CD4-positive, alpha-beta T cell (primary cell): ENCODE measurements at regions of chr12 and their contacts with region 1.

Region 1: GRCh38 chr12:122225683-122226407 is at the start of gene DIABLO:
- DNase-seq: peak; percentile 99 to 100 (median 100)
- ATAC-seq: peak; percentile 94
- H3K4me3 ChIP-seq: peak within 1 kb of the TSS; percentile 94
- H3K4me3 Mint-ChIP-seq: peak within 1 kb of the TSS; percentile 95
- H3K27ac ChIP-seq: peak within 1 kb of the TSS; percentile 95 to 97
- H3K27ac Mint-ChIP-seq: peak within 1 kb of the TSS; percentile 95
- H3K4me1 ChIP-seq: peaks cover 37% of the 10 kb centered on the region
- H3K4me1 Mint-ChIP-seq: peaks cover 37% of the 10 kb centered on the region
- H3K27me3 ChIP-seq: no peaks in the 10 kb centered on the region
- H3K27me3 Mint-ChIP-seq: no peaks in the 10 kb centered on the region
- CTCF ChIP-seq: no peak
- total RNA-seq, gene DIABLO: 90.3 to 91.3 TPM

Region 2: DNA sequence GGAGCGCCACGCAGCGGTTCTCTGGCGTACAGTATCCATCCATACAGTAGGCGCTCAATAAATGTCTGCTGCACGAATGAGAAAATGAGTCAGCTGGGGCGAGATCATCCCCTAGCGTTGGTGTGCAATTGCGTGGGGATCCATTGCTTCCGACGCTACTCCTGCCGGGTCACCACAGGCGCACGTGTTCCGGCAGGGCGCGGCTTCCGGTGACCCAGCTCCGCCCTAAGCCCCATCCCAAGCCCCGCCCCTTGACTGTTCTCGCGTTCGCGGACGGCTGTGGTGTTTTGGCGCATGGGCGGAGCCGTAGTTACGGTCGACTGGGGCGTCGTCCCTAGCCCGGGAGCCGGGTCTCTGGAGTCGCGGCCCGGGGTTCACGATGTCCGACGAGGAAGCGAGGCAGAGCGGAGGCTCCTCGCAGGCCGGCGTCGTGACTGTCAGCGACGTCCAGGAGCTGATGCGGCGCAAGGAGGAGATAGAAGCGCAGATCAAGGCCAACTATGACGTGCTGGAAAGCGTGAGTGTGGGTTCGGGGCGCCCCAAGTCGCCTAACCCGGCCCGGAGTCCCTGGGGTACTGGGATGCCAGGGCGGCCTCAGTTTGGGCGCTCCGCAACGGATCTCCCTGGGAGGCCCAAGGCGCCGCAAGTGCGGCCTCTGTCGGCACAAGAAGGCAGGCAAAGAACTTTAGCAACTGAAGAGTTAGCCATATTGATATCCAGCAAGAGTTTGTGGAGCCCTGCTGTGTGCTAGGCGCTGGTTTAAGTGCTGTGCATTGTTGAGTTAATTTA is 337.2 kb before region 1 on chr12 and contains the start of gene PSMD9:
- CTCF ChIA-PET with region 1: no interaction called
- POLR2A ChIA-PET with region 1: interaction called, 10 read pairs
- intact Hi-C with region 1: no loop called
- DNase-seq: peak; percentile 96 to 99 (median 98)
- ATAC-seq: peak; percentile 90
- H3K4me3 ChIP-seq: peak within 1 kb of the TSS; percentile 96
- H3K4me3 Mint-ChIP-seq: peak within 1 kb of the TSS; percentile 96
- H3K27ac ChIP-seq: peak within 1 kb of the TSS; percentile 86 to 97
- H3K27ac Mint-ChIP-seq: peak within 1 kb of the TSS; percentile 96
- H3K4me1 ChIP-seq: peaks cover 39% of the 10 kb centered on the region
- H3K4me1 Mint-ChIP-seq: peaks cover 32% of the 10 kb centered on the region
- H3K27me3 ChIP-seq: no peaks in the 10 kb centered on the region
- H3K27me3 Mint-ChIP-seq: no peaks in the 10 kb centered on the region
- CTCF ChIP-seq: peak; percentile 21
- total RNA-seq, gene PSMD9: 29.5 to 31.8 TPM

Region 3: DNA sequence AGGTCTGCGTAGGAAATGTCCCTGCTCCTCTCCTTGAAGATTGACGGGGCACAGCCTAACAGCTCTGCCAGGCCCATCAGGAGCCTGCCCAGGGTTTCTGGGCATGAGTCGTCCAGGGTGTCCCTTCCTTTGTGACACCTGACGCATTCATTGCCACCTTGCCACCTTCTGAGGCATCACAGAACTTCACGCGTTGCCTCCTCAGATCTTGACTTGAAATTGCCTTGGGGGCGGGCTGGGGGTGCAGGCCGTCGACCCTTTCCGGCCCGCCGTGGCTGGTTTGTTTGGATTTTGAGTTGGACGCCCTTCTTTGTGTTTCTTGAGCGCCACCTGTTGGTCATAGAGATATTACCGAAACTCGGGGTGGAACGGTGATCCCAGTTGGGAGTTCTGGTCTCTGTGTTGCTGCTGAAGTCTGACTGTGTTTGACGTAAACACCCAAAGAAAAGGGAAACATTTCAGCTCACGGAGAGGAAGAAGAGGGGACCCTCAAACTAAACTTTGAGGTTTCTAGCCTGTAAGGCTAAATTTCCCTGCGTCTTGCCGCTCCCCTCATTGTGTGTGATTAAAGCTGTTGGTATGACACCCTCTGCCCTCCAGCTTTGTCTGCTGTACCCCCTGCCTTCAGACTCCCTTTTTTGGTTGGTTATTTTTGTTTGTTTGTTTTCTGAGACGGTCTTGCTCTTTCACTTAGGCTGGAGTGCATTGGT is 102.6 kb before region 1 on chr12:
- CTCF ChIA-PET with region 1: no interaction called
- POLR2A ChIA-PET with region 1: no interaction called
- intact Hi-C with region 1: no loop called
- DNase-seq: peak; percentile 53 to 84 (median 66)
- ATAC-seq: peak; percentile 79
- H3K4me3 ChIP-seq: no peak overlapping the region
- H3K4me3 Mint-ChIP-seq: peak overlapping the region; percentile 68
- H3K27ac ChIP-seq: no peak overlapping the region
- H3K27ac Mint-ChIP-seq: peak overlapping the region; percentile 69
- H3K4me1 ChIP-seq: peaks cover 19% of the 10 kb centered on the region
- H3K4me1 Mint-ChIP-seq: peaks cover 39% of the 10 kb centered on the region
- H3K27me3 ChIP-seq: no peaks in the 10 kb centered on the region
- H3K27me3 Mint-ChIP-seq: no peaks in the 10 kb centered on the region
- CTCF ChIP-seq: peak; percentile 95

Region 4: GRCh38 chr12:122166422-122167349 is 59.2 kb before region 1 on chr12:
- CTCF ChIA-PET with region 1: no interaction called
- POLR2A ChIA-PET with region 1: no interaction called
- intact Hi-C with region 1: no loop called
- DNase-seq: peak in 1 of 14 experiments; percentile 43
- ATAC-seq: no peak
- H3K4me3 ChIP-seq: no peak overlapping the region
- H3K4me3 Mint-ChIP-seq: no peak overlapping the region
- H3K27ac ChIP-seq: no peak overlapping the region
- H3K27ac Mint-ChIP-seq: no peak overlapping the region
- H3K4me1 ChIP-seq: peaks cover 4% of the 10 kb centered on the region
- H3K4me1 Mint-ChIP-seq: no peaks in the 10 kb centered on the region
- H3K27me3 ChIP-seq: no peaks in the 10 kb centered on the region
- H3K27me3 Mint-ChIP-seq: no peaks in the 10 kb centered on the region
- CTCF ChIP-seq: no peak

Region 5: GRCh38 chr12:122215771-122216170 is 10.1 kb before region 1 on chr12:
- CTCF ChIA-PET with region 1: no interaction called
- POLR2A ChIA-PET with region 1: interaction called, 18 read pairs
- intact Hi-C with region 1: no loop called
- DNase-seq: no peak
- ATAC-seq: no peak
- H3K4me3 ChIP-seq: no peak overlapping the region
- H3K4me3 Mint-ChIP-seq: no peak overlapping the region
- H3K27ac ChIP-seq: no peak overlapping the region
- H3K27ac Mint-ChIP-seq: no peak overlapping the region
- H3K4me1 ChIP-seq: no peaks in the 10 kb centered on the region
- H3K4me1 Mint-ChIP-seq: peaks cover under 1% of the 10 kb centered on the region
- H3K27me3 ChIP-seq: no peaks in the 10 kb centered on the region
- H3K27me3 Mint-ChIP-seq: no peaks in the 10 kb centered on the region
- CTCF ChIP-seq: no peak

Region 6: DNA sequence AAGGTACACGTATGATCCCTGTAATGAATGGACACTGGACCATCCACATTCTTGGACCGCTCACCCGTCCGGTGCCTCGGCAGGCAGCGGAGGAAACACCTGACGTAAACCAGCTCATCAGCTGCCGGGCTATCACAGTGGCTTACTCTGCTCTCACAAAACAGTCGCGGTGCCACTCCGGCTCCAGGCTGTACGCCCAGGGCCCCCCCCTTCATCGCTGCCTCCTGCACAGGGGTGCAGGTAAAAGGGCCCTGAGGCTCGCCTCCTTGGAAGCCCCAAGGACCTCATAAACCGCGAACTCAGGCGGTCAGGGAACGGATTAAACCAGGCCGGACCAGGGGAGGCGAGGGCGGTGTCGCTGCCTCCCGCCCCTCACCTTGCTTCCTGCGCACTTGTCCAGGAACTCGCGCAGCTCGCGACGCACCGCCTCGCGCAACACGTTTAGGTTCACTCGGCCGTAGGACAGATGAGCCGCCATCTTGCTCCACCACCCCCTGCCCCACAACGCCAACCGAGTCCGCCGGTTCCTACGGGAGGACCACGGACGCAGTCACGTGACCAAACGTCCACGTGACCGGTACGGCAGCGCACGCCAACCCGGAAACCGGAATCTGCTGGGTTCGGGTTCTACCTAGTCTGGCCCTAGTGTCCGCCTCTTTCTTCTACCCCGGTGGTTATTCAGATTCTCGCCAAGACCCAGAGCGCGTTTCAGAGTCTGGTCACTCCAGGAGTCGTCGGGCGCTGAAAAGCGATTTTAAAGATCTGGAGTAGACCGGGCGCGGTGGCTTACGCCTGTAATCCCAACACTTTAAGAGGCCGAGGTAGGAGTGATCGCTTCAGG is 40.3 kb after region 1 on chr12 and contains the start of gene VPS33A:
- CTCF ChIA-PET with region 1: interaction called, 24 read pairs
- POLR2A ChIA-PET with region 1: interaction called, 49 read pairs
- intact Hi-C with region 1: loop called (anchors 1 kb)
- DNase-seq: peak; percentile 85 to 97 (median 88)
- ATAC-seq: peak; percentile 68
- H3K4me3 ChIP-seq: peak within 1 kb of the TSS; percentile 85
- H3K4me3 Mint-ChIP-seq: peak within 1 kb of the TSS; percentile 100
- H3K27ac ChIP-seq: peak within 1 kb of the TSS; percentile 94 to 97
- H3K27ac Mint-ChIP-seq: peak within 1 kb of the TSS; percentile 99
- H3K4me1 ChIP-seq: peaks cover 25% of the 10 kb centered on the region
- H3K4me1 Mint-ChIP-seq: peaks cover 33% of the 10 kb centered on the region
- H3K27me3 ChIP-seq: no peaks in the 10 kb centered on the region
- H3K27me3 Mint-ChIP-seq: peaks cover 8% of the 10 kb centered on the region
- CTCF ChIP-seq: no peak
- total RNA-seq, gene VPS33A: 12.0 to 14.2 TPM

Region 7: GRCh38 chr12:122526683-122527477 is 301.0 kb after region 1 on chr12 and contains the starts of genes KNTC1 and RSRC2:
- CTCF ChIA-PET with region 1: no interaction called
- POLR2A ChIA-PET with region 1: interaction called, 19 read pairs
- intact Hi-C with region 1: loop called in 1 of 2 experiments (anchors 5 kb)
- DNase-seq: peak; percentile 93 to 100 (median 96)
- ATAC-seq: peak; percentile 90
- H3K4me3 ChIP-seq: peak within 1 kb of the TSS; percentile 97
- H3K4me3 Mint-ChIP-seq: no peak within 1 kb of the TSS
- H3K27ac ChIP-seq: peak within 1 kb of the TSS; percentile 98 to 99
- H3K27ac Mint-ChIP-seq: no peak within 1 kb of the TSS
- H3K4me1 ChIP-seq: peaks cover 21% of the 10 kb centered on the region
- H3K4me1 Mint-ChIP-seq: peaks cover 36% of the 10 kb centered on the region
- H3K27me3 ChIP-seq: no peaks in the 10 kb centered on the region
- H3K27me3 Mint-ChIP-seq: no peaks in the 10 kb centered on the region
- CTCF ChIP-seq: no peak
- total RNA-seq, gene KNTC1: 23.3 to 23.8 TPM
- total RNA-seq, gene RSRC2: 339 to 341 TPM

Region 8: GRCh38 chr12:122974274-122974891 is 748.5 kb after region 1 on chr12:
- CTCF ChIA-PET with region 1: no interaction called
- POLR2A ChIA-PET with region 1: no interaction called
- intact Hi-C with region 1: loop called in 1 of 2 experiments (anchors 5 kb)
- DNase-seq: peak; percentile 97 to 99 (median 99)
- ATAC-seq: peak; percentile 81
- H3K4me3 ChIP-seq: peak overlapping the region; percentile 97
- H3K4me3 Mint-ChIP-seq: peak overlapping the region; percentile 98
- H3K27ac ChIP-seq: peak overlapping the region; percentile 99 to 100
- H3K27ac Mint-ChIP-seq: peak overlapping the region; percentile 98
- H3K4me1 ChIP-seq: peaks cover 49% of the 10 kb centered on the region
- H3K4me1 Mint-ChIP-seq: peaks cover 29% of the 10 kb centered on the region
- H3K27me3 ChIP-seq: no peaks in the 10 kb centered on the region
- H3K27me3 Mint-ChIP-seq: no peaks in the 10 kb centered on the region
- CTCF ChIP-seq: no peak